Naive thymus-derived CD4-positive, alpha-beta T cell (primary cell): ENCODE measurements at regions of chr19 and their contacts with region 1.

Region 1: GRCh38 chr19:58362272-58362994 is at the start of gene ZNF497:
- DNase-seq: peak; percentile 91 to 96 (median 95)
- ATAC-seq: peak; percentile 92
- H3K4me3 ChIP-seq: peak within 1 kb of the TSS; percentile 99
- H3K4me3 Mint-ChIP-seq: peak within 1 kb of the TSS; percentile 89 to 99 (median 95)
- H3K27ac ChIP-seq: peak within 1 kb of the TSS; percentile 78
- H3K27ac Mint-ChIP-seq: peak within 1 kb of the TSS; percentile 71 to 96 (median 90)
- H3K4me1 ChIP-seq: peaks cover 5 to 7% of the 10 kb centered on the region in 2 donors
- H3K4me1 Mint-ChIP-seq: peaks cover 7 to 21% (median 11%) of the 10 kb centered on the region in 7 donors
- H3K27me3 ChIP-seq: no peaks in the 10 kb centered on the region
- H3K27me3 Mint-ChIP-seq: peaks cover 0 to 5% (median 0%) of the 10 kb centered on the region in 5 donors
- total RNA-seq, gene ZNF497: 1.0 to 2.7 (median 1.8) TPM

Region 2: DNA sequence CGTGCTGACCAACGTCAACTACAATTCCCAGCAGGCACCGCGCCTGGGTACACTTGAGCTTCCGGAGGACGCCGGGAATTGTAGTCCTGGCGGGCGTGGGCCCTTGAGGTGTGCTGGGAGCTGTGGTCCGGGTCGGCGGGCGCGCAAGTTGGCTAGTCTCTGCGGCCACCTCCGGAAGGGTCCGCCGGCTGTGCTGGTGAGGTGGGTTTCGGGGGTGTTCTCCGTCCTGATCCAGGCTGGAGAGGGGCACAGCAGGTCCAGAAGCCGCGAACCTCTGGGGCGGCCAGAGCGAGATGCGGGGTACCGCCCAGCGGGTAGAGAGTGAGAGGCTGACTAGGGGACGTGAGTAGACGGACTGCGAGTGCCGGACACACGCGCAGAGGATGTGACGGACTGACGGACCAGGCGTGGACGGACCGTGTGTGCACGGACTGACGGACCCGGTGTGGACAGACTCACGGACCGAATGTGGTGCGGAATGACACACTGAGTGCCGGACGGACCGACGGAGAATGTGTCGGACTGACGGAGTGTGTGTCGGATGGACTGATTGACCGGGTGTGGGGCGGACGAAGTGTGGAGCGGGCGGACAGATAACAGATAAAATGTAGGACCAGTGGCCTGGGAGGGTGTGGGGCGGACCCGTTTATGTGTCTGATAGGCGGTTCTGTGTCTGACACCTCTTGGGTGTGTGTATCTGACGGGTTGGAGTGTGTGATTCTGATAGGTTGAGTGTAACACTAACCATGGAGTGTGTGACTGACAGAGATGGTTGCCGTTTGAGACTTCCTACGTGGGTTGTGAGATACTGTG is 35.3 kb before region 1 on chr19 and contains the start of gene ZSCAN22:
- CTCF ChIA-PET with region 1: no interaction called
- POLR2A ChIA-PET with region 1: interaction called, 13 read pairs
- intact Hi-C with region 1: loop called (anchors 1 kb)
- DNase-seq: peak; percentile 65 to 89 (median 78)
- ATAC-seq: peak; percentile 90
- H3K4me3 ChIP-seq: peak within 1 kb of the TSS; percentile 95
- H3K4me3 Mint-ChIP-seq: no peak within 1 kb of the TSS
- H3K27ac ChIP-seq: peak within 1 kb of the TSS; percentile 72
- H3K27ac Mint-ChIP-seq: no peak within 1 kb of the TSS
- H3K4me1 ChIP-seq: peaks cover 14 to 16% of the 10 kb centered on the region in 2 donors
- H3K4me1 Mint-ChIP-seq: peaks cover 0 to 10% (median 6%) of the 10 kb centered on the region in 7 donors
- H3K27me3 ChIP-seq: no peaks in the 10 kb centered on the region
- H3K27me3 Mint-ChIP-seq: no peaks in the 10 kb centered on the region
- total RNA-seq, gene ZSCAN22: 1.1 to 6.0 (median 4.5) TPM

Region 3: GRCh38 chr19:58372311-58373133 is 10.1 kb after region 1 on chr19:
- CTCF ChIA-PET with region 1: no interaction called
- POLR2A ChIA-PET with region 1: interaction called, 34 read pairs
- intact Hi-C with region 1: no loop called
- DNase-seq: peak in 1 of 9 donors; percentile 3
- ATAC-seq: no peak
- H3K4me3 ChIP-seq: no peak overlapping the region
- H3K4me3 Mint-ChIP-seq: no peak overlapping the region
- H3K27ac ChIP-seq: no peak overlapping the region
- H3K27ac Mint-ChIP-seq: no peak overlapping the region
- H3K4me1 ChIP-seq: no peaks in the 10 kb centered on the region
- H3K4me1 Mint-ChIP-seq: peaks cover 0 to 2% (median 0%) of the 10 kb centered on the region in 7 donors
- H3K27me3 ChIP-seq: no peaks in the 10 kb centered on the region
- H3K27me3 Mint-ChIP-seq: no peaks in the 10 kb centered on the region

Region 4: DNA sequence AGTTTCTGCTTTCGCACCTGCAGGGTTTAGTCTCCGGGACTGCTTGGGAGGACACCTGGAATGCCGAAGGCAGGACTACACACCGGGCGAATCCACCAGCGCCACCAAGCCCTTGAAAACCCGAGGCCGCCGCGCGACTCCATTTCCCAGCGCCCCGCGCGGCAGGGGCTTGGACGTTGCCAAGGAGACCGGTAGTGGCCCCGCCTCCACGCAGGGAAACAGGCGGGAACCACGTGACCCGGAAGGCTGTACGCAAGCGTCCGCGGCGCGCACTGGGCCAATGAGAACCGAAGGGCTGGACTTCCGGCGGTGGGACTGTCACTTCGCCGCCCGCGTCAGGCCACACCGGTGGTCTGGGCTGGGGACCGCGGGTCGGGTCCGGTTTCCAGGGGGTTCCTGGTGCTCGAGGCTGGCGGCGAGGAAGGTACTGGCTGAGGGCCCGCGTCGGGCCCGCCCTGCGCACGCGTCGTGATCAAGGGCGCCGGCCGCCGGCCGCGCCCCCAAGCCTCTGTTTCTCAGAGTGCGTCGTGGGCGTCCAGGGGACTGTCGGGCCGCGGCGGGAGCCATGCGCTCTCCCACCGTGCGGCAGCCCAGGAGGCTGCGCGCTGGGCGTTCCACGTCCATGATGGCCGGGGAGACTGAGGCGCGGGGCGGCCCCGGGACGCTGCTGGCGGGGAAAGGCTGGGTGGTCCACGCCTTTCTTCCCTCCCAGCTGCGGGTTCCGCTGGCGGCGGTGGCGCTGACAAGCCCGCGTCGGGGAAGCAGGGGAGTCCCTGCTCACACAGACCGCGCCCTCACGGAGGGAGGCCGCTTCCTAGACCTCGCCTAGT is 104.5 kb after region 1 on chr19 and contains the start of gene ZNF324:
- CTCF ChIA-PET with region 1: no interaction called
- POLR2A ChIA-PET with region 1: interaction called, 5 read pairs
- intact Hi-C with region 1: loop called (anchors 1 to 2 kb)
- DNase-seq: peak; percentile 92 to 97 (median 95)
- ATAC-seq: peak; percentile 98
- H3K4me3 ChIP-seq: peak within 1 kb of the TSS; percentile 92
- H3K4me3 Mint-ChIP-seq: peak within 1 kb of the TSS; percentile 80 to 89 (median 86)
- H3K27ac ChIP-seq: peak within 1 kb of the TSS; percentile 99
- H3K27ac Mint-ChIP-seq: peak within 1 kb of the TSS in 8 of 9 donors; percentile 67 to 91 (median 85)
- H3K4me1 ChIP-seq: peaks cover 7 to 11% of the 10 kb centered on the region in 2 donors
- H3K4me1 Mint-ChIP-seq: peaks cover 14 to 27% (median 22%) of the 10 kb centered on the region in 7 donors
- H3K27me3 ChIP-seq: no peaks in the 10 kb centered on the region
- H3K27me3 Mint-ChIP-seq: peaks cover 0 to 3% (median 0%) of the 10 kb centered on the region in 5 donors
- total RNA-seq, gene ZNF324: 14.2 to 28.0 (median 23.4) TPM

Region 5: GRCh38 chr19:58513694-58514563 is 151.5 kb after region 1 on chr19:
- CTCF ChIA-PET with region 1: no interaction called
- POLR2A ChIA-PET with region 1: interaction called, 4 read pairs
- intact Hi-C with region 1: loop called in 1 of 2 experiments (anchors 1 kb)
- DNase-seq: peak; percentile 91 to 99 (median 95)
- ATAC-seq: peak; percentile 98
- H3K4me3 ChIP-seq: peak overlapping the region; percentile 39
- H3K4me3 Mint-ChIP-seq: peak overlapping the region; percentile 73 to 93 (median 84)
- H3K27ac ChIP-seq: peak overlapping the region; percentile 65
- H3K27ac Mint-ChIP-seq: peak overlapping the region; percentile 67 to 94 (median 85)
- H3K4me1 ChIP-seq: peaks cover 17 to 21% of the 10 kb centered on the region in 2 donors
- H3K4me1 Mint-ChIP-seq: peaks cover 17 to 40% (median 27%) of the 10 kb centered on the region in 7 donors
- H3K27me3 ChIP-seq: no peaks in the 10 kb centered on the region
- H3K27me3 Mint-ChIP-seq: no peaks in the 10 kb centered on the region